ENCODE measurements at regions of chr10 and their contacts with region 1.

Region 1: GRCh38 chr10:68924593-68924992 is 23.5 kb downstream of the DDX50 start:
- DNase-seq: no peak
- H3K4me3 ChIP-seq: no peak overlapping the region
- H3K27ac ChIP-seq: no peak overlapping the region
- H3K4me1 ChIP-seq: no peaks in the 10 kb centered on the region
- H3K27me3 ChIP-seq: no peaks in the 10 kb centered on the region
- CTCF ChIP-seq: no peak

Region 2: DNA sequence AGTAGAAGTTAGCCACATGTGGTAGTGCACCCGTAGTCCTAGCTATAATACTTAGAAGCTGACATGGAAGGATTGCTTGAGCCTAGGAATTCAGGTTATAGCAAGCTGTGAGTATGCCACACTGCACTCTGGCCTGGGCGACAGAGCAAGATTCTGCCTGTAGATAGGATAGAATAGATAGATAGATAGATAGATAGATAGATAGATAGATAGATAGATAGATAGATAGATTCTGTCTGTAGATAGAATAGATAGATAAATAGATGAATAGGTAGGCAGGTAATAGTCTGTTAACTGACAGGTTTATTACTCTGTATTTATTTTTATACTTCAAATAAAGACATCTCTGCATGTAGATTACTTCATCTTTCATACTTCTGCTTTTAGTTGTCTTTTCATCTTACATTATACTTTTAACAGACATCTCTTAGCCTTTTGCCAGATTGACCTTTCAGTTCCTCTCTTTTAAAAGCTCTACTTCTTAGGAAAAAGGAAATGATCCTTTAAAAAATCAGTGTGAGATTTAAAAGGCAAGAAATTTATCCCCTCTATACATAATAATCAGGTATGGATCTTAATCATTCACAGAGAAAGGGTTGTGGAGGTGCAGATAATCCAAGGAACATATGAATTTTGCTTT is 171.8 kb before region 1 on chr10:
- intact Hi-C with region 1: loop called (anchors 5 kb)
- DNase-seq: no peak
- H3K4me3 ChIP-seq: no peak overlapping the region
- H3K27ac ChIP-seq: no peak overlapping the region
- H3K4me1 ChIP-seq: no peaks in the 10 kb centered on the region
- H3K27me3 ChIP-seq: no peaks in the 10 kb centered on the region
- CTCF ChIP-seq: no peak

Region 3: DNA sequence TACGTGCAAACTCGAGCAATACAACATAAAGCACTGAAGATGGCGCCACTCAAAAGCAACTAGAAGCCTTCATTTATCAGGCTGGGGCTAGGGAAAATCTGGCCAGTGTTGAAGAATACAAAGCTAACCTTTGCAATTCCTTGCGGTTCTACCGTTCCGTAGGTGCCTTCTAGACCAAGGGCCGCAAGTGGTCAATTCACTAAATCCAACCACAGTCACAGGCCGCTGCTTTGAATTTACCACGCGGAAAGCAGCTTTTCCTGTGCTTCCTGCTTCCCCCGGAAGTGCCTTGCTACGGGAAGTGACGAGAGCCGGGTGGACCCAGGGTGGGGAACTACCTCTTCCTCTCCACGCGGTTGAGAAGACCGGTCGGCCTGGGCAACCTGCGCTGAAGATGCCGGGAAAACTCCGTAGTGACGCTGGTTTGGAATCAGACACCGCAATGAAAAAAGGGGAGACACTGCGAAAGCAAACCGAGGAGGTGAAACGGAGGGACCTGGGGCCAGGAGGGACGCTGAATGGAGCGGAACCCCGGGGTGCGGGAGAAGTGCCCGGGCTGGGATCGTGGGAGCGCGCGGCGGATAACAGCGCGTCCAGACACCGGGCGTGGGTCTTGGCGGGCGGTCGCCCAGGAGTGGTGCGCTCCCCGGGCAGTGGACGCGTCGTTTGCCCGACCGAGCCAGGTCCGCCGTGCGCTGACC is 31.4 kb after region 1 on chr10 and contains the start of gene DDX21:
- intact Hi-C with region 1: no loop called
- DNase-seq: peak; percentile 51 to 95
- H3K4me3 ChIP-seq: peak within 1 kb of the TSS; percentile 84 to 88
- H3K27ac ChIP-seq: peak within 1 kb of the TSS; percentile 85 to 92
- H3K4me1 ChIP-seq: peaks cover 6 to 17% of the 10 kb centered on the region in 2 donors
- H3K27me3 ChIP-seq: no peaks in the 10 kb centered on the region
- CTCF ChIP-seq: peak; percentile 57 to 72 (median 62)
- total RNA-seq, gene DDX21: 26.5 TPM

Region 4: GRCh38 chr10:69004821-69005220 is 80.2 kb after region 1 on chr10:
- intact Hi-C with region 1: no loop called
- DNase-seq: no peak
- H3K4me3 ChIP-seq: no peak overlapping the region
- H3K27ac ChIP-seq: no peak overlapping the region
- H3K4me1 ChIP-seq: peaks cover 0 to 4% of the 10 kb centered on the region in 2 donors
- H3K27me3 ChIP-seq: no peaks in the 10 kb centered on the region
- CTCF ChIP-seq: peak; percentile 34 to 50 (median 34)